MCF 10A (cell line): ENCODE measurements at regions of chr11 and their contacts with region 1.

Region 1: DNA sequence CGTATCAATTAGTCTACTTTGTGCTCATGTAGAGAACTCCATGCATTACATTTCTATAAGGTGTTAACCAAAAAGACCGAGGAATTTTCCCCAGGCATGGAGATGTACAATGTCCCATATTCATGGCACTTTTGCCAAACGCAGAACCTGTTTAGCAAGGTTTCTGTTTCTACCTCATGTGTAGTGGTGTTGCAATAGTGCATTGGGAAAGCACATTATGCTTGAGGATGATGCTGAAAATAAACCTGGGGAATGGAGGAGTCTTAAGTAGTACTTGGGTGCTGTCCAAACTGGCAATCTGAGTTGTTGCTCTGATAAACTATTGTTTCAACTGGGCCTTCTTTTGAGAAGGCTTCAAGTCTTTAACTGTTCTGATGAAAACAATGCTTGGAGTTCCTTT is 11.5 kb upstream of the MUC15 start:
- DNase-seq: peak; percentile 92
- H3K4me3 Mint-ChIP-seq: peak overlapping the region; percentile 35
- H3K27ac Mint-ChIP-seq: peak overlapping the region; percentile 87
- H3K4me1 Mint-ChIP-seq: peaks cover 31% of the 10 kb centered on the region
- H3K27me3 Mint-ChIP-seq: no peaks in the 10 kb centered on the region
- CTCF ChIP-seq: no peak

Region 2: DNA sequence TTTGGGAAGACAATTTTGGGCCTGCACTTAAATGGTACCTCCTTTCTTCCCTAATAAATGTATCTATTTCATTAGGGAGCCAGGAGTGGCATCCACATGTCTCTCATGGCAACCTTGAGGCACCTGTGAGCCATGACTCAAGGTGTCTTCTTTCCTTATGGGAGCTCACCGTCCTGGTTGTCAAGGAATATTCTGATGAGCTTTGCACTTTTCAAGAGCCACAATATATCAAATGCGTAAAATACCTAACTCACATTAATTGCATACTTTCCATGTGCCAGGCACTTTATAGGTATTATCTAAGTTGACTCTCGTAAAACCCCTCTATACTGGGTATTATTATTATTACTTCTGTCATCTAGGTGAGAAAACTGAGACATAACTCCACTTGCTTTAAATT is 44.0 kb before region 1 on chr11:
- CTCF ChIA-PET with region 1: no interaction called
- POLR2A ChIA-PET with region 1: no interaction called
- intact Hi-C with region 1: no loop called
- DNase-seq: no peak
- H3K4me3 Mint-ChIP-seq: no peak overlapping the region
- H3K27ac Mint-ChIP-seq: no peak overlapping the region
- H3K4me1 Mint-ChIP-seq: no peaks in the 10 kb centered on the region
- H3K27me3 Mint-ChIP-seq: no peaks in the 10 kb centered on the region
- CTCF ChIP-seq: no peak

Region 3: GRCh38 chr11:26607725-26608506 is 24.4 kb after region 1 on chr11:
- CTCF ChIA-PET with region 1: no interaction called
- POLR2A ChIA-PET with region 1: no interaction called
- intact Hi-C with region 1: no loop called
- DNase-seq: no peak
- H3K4me3 Mint-ChIP-seq: no peak overlapping the region
- H3K27ac Mint-ChIP-seq: no peak overlapping the region
- H3K4me1 Mint-ChIP-seq: no peaks in the 10 kb centered on the region
- H3K27me3 Mint-ChIP-seq: no peaks in the 10 kb centered on the region
- CTCF ChIP-seq: no peak

Region 4: GRCh38 chr11:26621141-26621540 is 37.6 kb after region 1 on chr11:
- CTCF ChIA-PET with region 1: interaction called, 3 read pairs
- POLR2A ChIA-PET with region 1: interaction called, 9 read pairs
- intact Hi-C with region 1: loop called (anchors 5 kb)
- DNase-seq: peak; percentile 73
- H3K4me3 Mint-ChIP-seq: no peak overlapping the region
- H3K27ac Mint-ChIP-seq: peak overlapping the region; percentile 80
- H3K4me1 Mint-ChIP-seq: peaks cover 26% of the 10 kb centered on the region
- H3K27me3 Mint-ChIP-seq: no peaks in the 10 kb centered on the region
- CTCF ChIP-seq: no peak

Region 5: GRCh38 chr11:27095059-27095458 is 511.5 kb after region 1 on chr11:
- CTCF ChIA-PET with region 1: no interaction called
- POLR2A ChIA-PET with region 1: no interaction called
- intact Hi-C with region 1: no loop called
- DNase-seq: no peak
- H3K4me3 Mint-ChIP-seq: no peak overlapping the region
- H3K27ac Mint-ChIP-seq: no peak overlapping the region
- H3K4me1 Mint-ChIP-seq: peaks cover 8% of the 10 kb centered on the region
- H3K27me3 Mint-ChIP-seq: no peaks in the 10 kb centered on the region
- CTCF ChIP-seq: no peak

Region 6: GRCh38 chr11:27437829-27438594 is 854.5 kb after region 1 on chr11:
- CTCF ChIA-PET with region 1: no interaction called
- POLR2A ChIA-PET with region 1: no interaction called
- intact Hi-C with region 1: no loop called
- DNase-seq: no peak
- H3K4me3 Mint-ChIP-seq: no peak overlapping the region
- H3K27ac Mint-ChIP-seq: no peak overlapping the region
- H3K4me1 Mint-ChIP-seq: no peaks in the 10 kb centered on the region
- H3K27me3 Mint-ChIP-seq: no peaks in the 10 kb centered on the region
- CTCF ChIP-seq: no peak